GM12878 (cell line): ENCODE measurements at regions of chr1 and their contacts with region 1.

Region 1: DNA sequence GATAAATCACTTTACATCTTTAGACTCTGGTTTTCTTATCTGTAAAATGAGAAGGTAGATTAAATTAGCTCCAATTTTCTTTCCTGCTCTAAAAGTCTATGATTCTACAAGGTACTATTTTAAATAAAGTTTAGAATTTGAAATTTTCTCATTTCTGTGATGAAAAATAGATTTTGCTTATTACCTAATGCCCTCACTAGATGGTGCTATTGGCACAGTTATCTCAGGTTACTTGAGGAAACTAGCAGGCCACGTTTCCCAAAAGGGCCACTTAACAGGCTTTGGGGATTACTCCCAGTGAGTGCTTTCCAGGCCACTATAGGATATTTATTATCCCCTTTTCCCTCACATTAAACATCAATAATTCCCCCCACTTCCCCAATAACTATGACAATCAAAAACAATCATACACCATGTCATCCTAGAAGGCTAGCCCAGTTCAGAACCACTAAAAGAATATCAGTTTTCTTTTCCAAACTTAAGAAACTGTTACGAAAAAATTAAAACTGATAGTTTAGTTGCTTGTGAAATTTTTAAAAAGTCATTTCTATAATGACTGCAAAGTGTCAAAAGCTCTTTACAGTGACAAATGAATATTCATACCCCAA is 30.6 kb downstream of the OMA1 start:
- DNase-seq: peak; percentile 13
- ATAC-seq: peak; percentile 63
- H3K4me3 ChIP-seq: no peak overlapping the region
- H3K27ac ChIP-seq: no peak overlapping the region
- H3K4me1 ChIP-seq: no peaks in the 10 kb centered on the region
- H3K27me3 ChIP-seq: no peaks in the 10 kb centered on the region
- CTCF ChIP-seq: peak; percentile 47 to 72 (median 59); a peak in 5 of 6 replicates
- EP300 ChIP-seq: no peak
- POLR2A ChIP-seq: no peak
- RAD21 ChIP-seq: peak; percentile 88

Region 2: DNA sequence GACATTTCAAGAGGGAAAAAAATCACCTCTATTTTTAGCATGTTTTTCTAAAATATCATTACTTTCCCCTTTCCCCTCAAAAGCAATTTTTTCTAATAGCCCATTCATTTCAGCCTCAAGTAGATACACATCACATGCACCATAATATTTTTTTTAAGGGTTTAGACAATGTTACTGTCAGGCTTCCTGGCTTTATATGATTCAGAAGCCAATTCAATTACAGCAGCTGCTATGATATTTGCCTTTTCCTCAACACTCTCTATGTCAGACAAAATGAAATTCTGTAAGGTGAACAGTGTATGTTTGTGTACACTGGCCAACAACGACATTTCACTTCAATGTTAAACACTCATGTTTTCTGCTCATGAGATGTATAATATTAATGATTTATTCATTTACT is 15.9 kb before region 1 on chr1:
- CTCF ChIA-PET with region 1: interaction called, 11 read pairs
- POLR2A ChIA-PET with region 1: no interaction called
- RAD21 ChIA-PET with region 1: no interaction called
- SMC1A ChIA-PET with region 1: interaction called, 6 read pairs
- in situ Hi-C with region 1: no loop called
- intact Hi-C with region 1: no loop called
- DNase-seq: no peak
- ATAC-seq: no peak
- H3K4me3 ChIP-seq: no peak overlapping the region
- H3K27ac ChIP-seq: no peak overlapping the region
- H3K4me1 ChIP-seq: no peaks in the 10 kb centered on the region
- H3K27me3 ChIP-seq: no peaks in the 10 kb centered on the region
- CTCF ChIP-seq: no peak
- EP300 ChIP-seq: no peak
- POLR2A ChIP-seq: no peak
- RAD21 ChIP-seq: no peak

Region 3: DNA sequence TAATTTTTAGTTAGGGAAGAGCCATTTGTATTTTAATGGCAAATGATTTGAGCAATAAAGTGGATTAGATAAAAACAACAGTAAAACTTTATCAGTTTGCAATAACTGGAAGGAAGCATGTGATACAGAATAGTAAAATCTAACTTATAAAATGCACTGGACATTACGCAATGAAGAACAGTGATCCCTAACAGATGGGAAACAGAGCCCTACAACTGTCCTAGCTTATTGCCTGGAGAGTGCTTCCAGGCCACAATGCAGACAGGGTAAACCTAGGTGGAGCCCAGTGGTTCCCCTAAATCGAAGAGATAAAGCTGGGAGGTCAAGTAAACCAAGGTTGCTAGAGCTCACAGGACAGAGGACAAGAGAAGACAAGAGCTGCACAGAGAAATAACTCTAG is 23.7 kb after region 1 on chr1:
- CTCF ChIA-PET with region 1: interaction called, 71 read pairs
- POLR2A ChIA-PET with region 1: no interaction called
- RAD21 ChIA-PET with region 1: interaction called, 35 read pairs
- SMC1A ChIA-PET with region 1: interaction called, 42 read pairs
- in situ Hi-C with region 1: no loop called
- intact Hi-C with region 1: no loop called
- DNase-seq: no peak
- ATAC-seq: no peak
- H3K4me3 ChIP-seq: no peak overlapping the region
- H3K27ac ChIP-seq: no peak overlapping the region
- H3K4me1 ChIP-seq: no peaks in the 10 kb centered on the region
- H3K27me3 ChIP-seq: no peaks in the 10 kb centered on the region
- CTCF ChIP-seq: no peak
- EP300 ChIP-seq: no peak
- POLR2A ChIP-seq: no peak
- RAD21 ChIP-seq: no peak

Region 4: DNA sequence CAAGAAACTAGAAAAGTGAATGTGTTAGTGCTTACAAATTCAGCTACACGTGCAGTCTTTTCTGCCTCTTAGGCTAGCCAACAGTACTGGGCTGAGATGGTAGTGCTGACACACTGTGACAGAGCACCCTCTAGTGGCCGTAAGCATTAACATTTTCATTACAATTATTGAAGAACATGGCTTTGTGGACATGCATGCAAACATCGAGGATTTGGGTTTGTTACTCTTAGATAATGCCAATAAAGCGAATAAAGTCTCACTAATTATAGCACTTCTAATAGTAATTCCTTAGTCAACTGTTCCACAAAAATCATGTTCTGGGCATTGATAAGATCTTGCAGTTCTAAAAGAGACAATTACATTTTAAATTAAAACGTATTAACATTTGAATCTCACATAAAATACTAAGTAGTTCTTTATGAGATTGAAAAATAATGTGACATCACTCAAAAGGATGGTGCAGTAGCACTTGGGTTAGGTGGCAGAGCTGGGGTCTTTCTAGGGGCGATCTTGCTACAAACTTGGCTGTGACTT is 136.8 kb after region 1 on chr1:
- CTCF ChIA-PET with region 1: interaction called, 135 read pairs
- POLR2A ChIA-PET with region 1: no interaction called
- RAD21 ChIA-PET with region 1: interaction called, 50 read pairs
- SMC1A ChIA-PET with region 1: interaction called, 101 read pairs
- in situ Hi-C with region 1: loop called (anchors 5 kb)
- intact Hi-C with region 1: loop called (anchors 1 kb)
- DNase-seq: peak; percentile 42
- ATAC-seq: peak; percentile 98
- H3K4me3 ChIP-seq: no peak overlapping the region
- H3K27ac ChIP-seq: no peak overlapping the region
- H3K4me1 ChIP-seq: no peaks in the 10 kb centered on the region
- H3K27me3 ChIP-seq: no peaks in the 10 kb centered on the region
- CTCF ChIP-seq: peak; percentile 67 to 94 (median 77)
- EP300 ChIP-seq: no peak
- POLR2A ChIP-seq: no peak
- RAD21 ChIP-seq: peak; percentile 98